ENCODE measurements at regions of chr22 and their contacts with region 1.

Region 1: GRCh38 chr22:37486224-37486845 is at the start of gene MFNG:
- DNase-seq: peak; percentile 46 to 90 (median 72)
- ATAC-seq: peak; percentile 48
- H3K4me3 ChIP-seq: peak within 1 kb of the TSS; percentile 94
- H3K4me3 Mint-ChIP-seq: peak within 1 kb of the TSS; percentile 93
- H3K27ac ChIP-seq: peak within 1 kb of the TSS; percentile 87 to 88
- H3K27ac Mint-ChIP-seq: peak within 1 kb of the TSS; percentile 98
- H3K4me1 ChIP-seq: peaks cover 85% of the 10 kb centered on the region
- H3K4me1 Mint-ChIP-seq: peaks cover 77% of the 10 kb centered on the region
- H3K27me3 ChIP-seq: no peaks in the 10 kb centered on the region
- H3K27me3 Mint-ChIP-seq: no peaks in the 10 kb centered on the region
- CTCF ChIP-seq: no peak
- total RNA-seq, gene MFNG: 85.1 to 89.9 TPM

Region 2: DNA sequence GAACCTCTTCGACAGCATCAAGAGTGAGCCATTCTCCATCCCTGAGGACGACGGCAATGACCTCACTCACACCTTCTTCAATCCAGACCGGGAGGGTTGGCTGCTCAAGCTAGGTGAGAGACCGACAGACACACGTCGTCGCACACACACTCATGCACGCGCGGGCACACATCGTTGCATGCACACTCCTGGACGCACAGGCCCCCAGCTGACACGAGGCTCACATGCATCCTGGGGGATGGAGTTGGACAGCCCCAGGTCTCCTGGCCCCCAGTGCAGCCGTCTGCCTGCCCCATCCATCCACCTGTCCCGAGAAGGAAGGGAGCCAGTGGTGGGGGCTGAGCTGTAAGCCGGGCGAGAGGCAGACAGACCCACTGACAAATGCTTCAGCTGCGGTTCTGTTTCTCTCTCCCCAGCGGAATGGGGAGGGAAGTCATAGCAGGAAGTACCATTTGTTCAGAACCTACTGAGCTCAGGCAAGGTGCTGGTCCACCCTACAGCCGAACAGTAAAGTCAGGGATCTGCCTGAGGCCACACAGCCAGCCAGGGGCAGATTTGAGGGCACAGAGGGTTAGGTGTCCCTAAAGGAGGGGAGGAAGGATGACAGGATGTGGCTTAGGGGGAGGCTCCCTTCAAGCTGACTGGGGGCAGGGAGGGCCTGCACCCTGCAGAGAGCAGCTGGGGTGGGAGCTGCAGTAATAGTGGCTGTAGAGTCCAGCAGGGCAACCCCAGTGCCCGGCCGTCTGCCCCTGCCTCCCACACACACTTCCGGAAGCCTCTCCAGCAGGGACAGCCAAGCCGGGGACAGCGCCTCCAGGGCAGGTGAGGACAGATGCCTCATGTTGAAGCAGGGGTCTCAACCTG is 176.9 kb before region 1 on chr22:
- CTCF ChIA-PET with region 1: no interaction called
- POLR2A ChIA-PET with region 1: interaction called, 18 read pairs
- intact Hi-C with region 1: no loop called
- DNase-seq: peak; percentile 13 to 88 (median 49)
- ATAC-seq: peak; percentile 56
- H3K4me3 ChIP-seq: peak overlapping the region; percentile 30
- H3K4me3 Mint-ChIP-seq: peak overlapping the region; percentile 77
- H3K27ac ChIP-seq: peak overlapping the region; percentile 47 to 81
- H3K27ac Mint-ChIP-seq: peak overlapping the region; percentile 95
- H3K4me1 ChIP-seq: peaks cover 100% of the 10 kb centered on the region
- H3K4me1 Mint-ChIP-seq: peaks cover 86% of the 10 kb centered on the region
- H3K27me3 ChIP-seq: no peaks in the 10 kb centered on the region
- H3K27me3 Mint-ChIP-seq: no peaks in the 10 kb centered on the region
- CTCF ChIP-seq: no peak

Region 3: GRCh38 chr22:37472418-37473006 is 13.8 kb before region 1 on chr22:
- CTCF ChIA-PET with region 1: interaction called, 17 read pairs
- POLR2A ChIA-PET with region 1: interaction called, 41 read pairs
- intact Hi-C with region 1: no loop called
- DNase-seq: peak; percentile 25 to 73 (median 47)
- ATAC-seq: no peak
- H3K4me3 ChIP-seq: no peak overlapping the region
- H3K4me3 Mint-ChIP-seq: no peak overlapping the region
- H3K27ac ChIP-seq: no peak overlapping the region
- H3K27ac Mint-ChIP-seq: peak overlapping the region; percentile 62
- H3K4me1 ChIP-seq: peaks cover 9% of the 10 kb centered on the region
- H3K4me1 Mint-ChIP-seq: peaks cover 18% of the 10 kb centered on the region
- H3K27me3 ChIP-seq: no peaks in the 10 kb centered on the region
- H3K27me3 Mint-ChIP-seq: no peaks in the 10 kb centered on the region
- CTCF ChIP-seq: peak; percentile 70